Panc1 (cell line): ENCODE measurements at regions of chr12 and their contacts with region 1.

Region 1: GRCh38 chr12:69515394-69515930 is 45.3 kb downstream of the FRS2 start:
- DNase-seq: no peak
- ATAC-seq: no peak
- H3K4me3 ChIP-seq: no peak overlapping the region
- H3K27ac ChIP-seq: no peak overlapping the region
- H3K4me1 ChIP-seq: peaks cover 19% of the 10 kb centered on the region
- H3K27me3 ChIP-seq: no peaks in the 10 kb centered on the region
- CTCF ChIP-seq: no peak

Region 2: DNA sequence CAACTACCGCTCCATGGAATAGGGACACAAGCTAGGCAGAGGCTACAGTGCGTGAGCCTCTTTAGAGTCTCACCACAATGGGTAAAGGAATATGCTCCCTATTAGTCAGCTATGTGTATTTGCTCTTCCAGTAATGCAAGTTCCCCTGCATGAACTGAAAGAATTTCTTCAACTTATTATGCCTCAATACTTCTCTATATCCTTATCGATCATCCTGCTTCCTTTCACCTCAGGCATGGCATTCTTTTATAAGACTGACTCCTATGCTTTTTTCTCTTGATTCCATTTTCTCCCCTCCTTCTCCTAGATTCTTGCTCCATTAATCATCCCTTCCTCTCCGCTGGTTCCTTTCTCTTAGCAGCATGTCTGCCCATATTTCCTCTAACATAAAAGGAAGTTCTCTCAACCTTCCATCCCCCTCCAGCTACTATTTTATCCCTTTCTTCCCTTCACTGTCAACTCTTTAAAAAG is 488.0 kb before region 1 on chr12:
- CTCF ChIA-PET with region 1: no interaction called
- POLR2A ChIA-PET with region 1: interaction called, 11 read pairs
- in situ Hi-C with region 1: no loop called
- intact Hi-C with region 1: no loop called
- DNase-seq: no peak
- ATAC-seq: no peak
- H3K4me3 ChIP-seq: no peak overlapping the region
- H3K27ac ChIP-seq: no peak overlapping the region
- H3K4me1 ChIP-seq: no peaks in the 10 kb centered on the region
- H3K27me3 ChIP-seq: no peaks in the 10 kb centered on the region
- CTCF ChIP-seq: no peak

Region 3: DNA sequence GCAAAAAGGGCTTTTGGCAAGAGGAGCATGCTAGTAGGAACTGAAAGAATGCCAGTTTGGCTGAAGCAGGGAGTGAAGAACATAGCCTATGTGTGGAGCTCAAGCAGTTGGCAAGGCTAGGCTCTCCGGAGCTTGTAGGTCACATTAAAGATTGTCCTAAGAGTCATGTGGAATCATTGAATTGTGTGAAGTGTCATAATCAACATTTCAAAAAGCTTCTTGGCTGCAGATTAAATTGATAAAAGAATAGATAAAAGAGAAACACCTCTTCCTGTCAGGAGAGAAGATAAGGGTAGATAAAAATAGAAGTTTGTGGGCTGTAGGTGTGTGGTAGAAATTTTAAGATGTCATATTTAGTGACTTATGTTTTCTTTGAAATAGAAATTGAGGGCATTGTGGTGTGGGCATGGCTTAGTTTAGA is 240.0 kb before region 1 on chr12:
- CTCF ChIA-PET with region 1: no interaction called
- POLR2A ChIA-PET with region 1: no interaction called
- in situ Hi-C with region 1: no loop called
- intact Hi-C with region 1: no loop called
- DNase-seq: no peak
- ATAC-seq: no peak
- H3K4me3 ChIP-seq: no peak overlapping the region
- H3K27ac ChIP-seq: no peak overlapping the region
- H3K4me1 ChIP-seq: no peaks in the 10 kb centered on the region
- H3K27me3 ChIP-seq: no peaks in the 10 kb centered on the region
- CTCF ChIP-seq: no peak

Region 4: GRCh38 chr12:69497308-69498026 is 18.0 kb before region 1 on chr12:
- CTCF ChIA-PET with region 1: no interaction called
- POLR2A ChIA-PET with region 1: no interaction called
- in situ Hi-C with region 1: no loop called
- intact Hi-C with region 1: no loop called
- DNase-seq: no peak
- ATAC-seq: peak; percentile 57
- H3K4me3 ChIP-seq: no peak overlapping the region
- H3K27ac ChIP-seq: 0 out of 2 replicates have a peak overlapping the region, but pooled peaks have one; percentile 3
- H3K4me1 ChIP-seq: peaks cover 19% of the 10 kb centered on the region
- H3K27me3 ChIP-seq: no peaks in the 10 kb centered on the region
- CTCF ChIP-seq: no peak